Dendritic cell treated with granulocyte-macrophage colony-stimulating factor and Interleukin-4, amounts not matched to agents 40 ng/mL and 50 ng/mL, for 4 days (primary cell): ENCODE measurements at regions of chr1 and their contacts with region 1.

Region 1: GRCh38 chr1:205255941-205256780 is 28.4 kb downstream of the TMCC2 start:
- H3K4me3 Mint-ChIP-seq: no peak overlapping the region
- H3K27ac Mint-ChIP-seq: peak overlapping the region; percentile 65
- H3K4me1 Mint-ChIP-seq: peaks cover 95% of the 10 kb centered on the region
- H3K27me3 Mint-ChIP-seq: peaks cover 6% of the 10 kb centered on the region

Region 2: DNA sequence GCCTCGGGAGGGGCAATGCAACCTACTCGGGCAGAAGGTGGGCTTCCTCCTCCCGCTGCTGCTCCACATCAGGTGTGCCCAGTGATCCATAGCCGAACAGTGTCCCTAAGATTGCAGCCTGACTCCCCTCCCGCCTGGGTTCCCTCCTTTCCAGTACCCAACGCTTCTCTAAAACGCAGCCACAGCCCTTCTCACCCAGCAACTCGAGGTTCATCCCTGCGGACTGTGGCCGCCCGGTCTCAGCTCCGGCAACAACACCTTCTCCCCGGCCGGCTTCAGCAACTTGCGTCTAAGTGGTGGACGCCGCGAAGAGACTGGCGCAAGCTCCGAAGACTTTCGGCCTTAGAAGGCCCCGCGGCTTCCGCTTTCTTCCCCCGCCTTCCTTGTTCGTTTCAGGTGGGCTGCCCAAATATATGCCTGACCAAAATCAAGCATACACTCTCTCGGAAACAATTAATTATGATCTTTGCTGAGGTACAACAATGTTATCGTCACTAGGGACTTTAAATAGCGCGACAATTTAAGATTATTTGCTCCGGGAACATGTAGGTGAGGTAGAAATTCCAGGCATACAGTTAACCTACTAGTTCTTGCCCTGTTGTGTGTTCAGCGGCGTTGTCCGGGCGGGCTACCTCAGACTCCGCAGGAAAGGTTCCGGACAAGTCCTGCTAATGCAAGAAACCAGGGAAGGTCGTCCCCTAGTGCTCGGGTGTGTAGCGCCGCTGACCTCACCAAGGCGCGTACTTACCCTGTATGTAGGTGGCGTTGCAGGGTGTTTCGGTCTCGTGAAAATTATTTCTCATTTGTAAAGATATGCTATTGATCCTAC is 134.3 kb before region 1 on chr1 and contains the start of gene RBBP5:
- intact Hi-C with region 1: loop called (anchors 5 kb)
- H3K4me3 Mint-ChIP-seq: peak within 1 kb of the TSS; percentile 99
- H3K27ac Mint-ChIP-seq: peak within 1 kb of the TSS; percentile 92
- H3K4me1 Mint-ChIP-seq: peaks cover 37% of the 10 kb centered on the region
- H3K27me3 Mint-ChIP-seq: no peaks in the 10 kb centered on the region

Region 3: DNA sequence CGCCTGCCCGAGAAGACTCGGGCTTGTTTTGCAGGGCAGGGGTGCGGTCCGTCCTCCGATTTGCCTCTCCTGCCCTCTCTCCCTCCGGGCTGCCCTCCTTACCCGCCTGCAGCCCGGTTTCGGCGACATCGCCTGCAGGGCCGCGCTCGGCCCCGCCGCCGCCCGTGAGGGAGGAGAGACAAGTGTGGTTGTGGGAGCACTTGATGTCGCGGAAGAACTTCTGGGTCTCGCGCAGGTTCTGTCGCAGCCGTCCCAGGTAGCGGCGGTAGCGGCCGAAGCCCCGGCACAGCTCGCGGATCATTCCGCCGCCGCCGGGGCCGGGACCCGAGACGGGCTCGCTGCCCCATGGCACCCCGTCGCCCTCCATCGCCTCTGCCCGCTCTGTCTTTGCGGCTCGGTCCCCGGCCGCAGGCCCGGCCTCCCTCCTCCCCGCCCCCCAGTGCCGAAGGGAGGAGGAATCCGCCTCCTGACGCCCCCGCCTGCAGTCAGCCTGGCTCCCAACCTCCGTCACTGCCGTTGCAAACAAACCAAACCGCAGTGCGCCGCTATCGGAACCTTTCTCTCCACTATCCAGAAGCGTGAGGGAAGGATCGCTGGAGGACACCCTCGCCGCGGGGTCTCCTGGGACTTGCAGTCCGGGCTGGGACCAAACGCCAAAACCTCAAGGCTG is 44.9 kb before region 1 on chr1 and contains the start of gene DSTYK:
- intact Hi-C with region 1: loop called (anchors 5 kb)
- H3K4me3 Mint-ChIP-seq: peak within 1 kb of the TSS; percentile 91
- H3K27ac Mint-ChIP-seq: peak within 1 kb of the TSS; percentile 96
- H3K4me1 Mint-ChIP-seq: peaks cover 51% of the 10 kb centered on the region
- H3K27me3 Mint-ChIP-seq: no peaks in the 10 kb centered on the region

Region 4: GRCh38 chr1:205229399-205229871 is 26.7 kb before region 1 on chr1:
- intact Hi-C with region 1: loop called (anchors 1 kb)
- H3K4me3 Mint-ChIP-seq: peak overlapping the region; percentile 91
- H3K27ac Mint-ChIP-seq: peak overlapping the region; percentile 88
- H3K4me1 Mint-ChIP-seq: peaks cover 71% of the 10 kb centered on the region
- H3K27me3 Mint-ChIP-seq: peaks cover 41% of the 10 kb centered on the region

Region 5: DNA sequence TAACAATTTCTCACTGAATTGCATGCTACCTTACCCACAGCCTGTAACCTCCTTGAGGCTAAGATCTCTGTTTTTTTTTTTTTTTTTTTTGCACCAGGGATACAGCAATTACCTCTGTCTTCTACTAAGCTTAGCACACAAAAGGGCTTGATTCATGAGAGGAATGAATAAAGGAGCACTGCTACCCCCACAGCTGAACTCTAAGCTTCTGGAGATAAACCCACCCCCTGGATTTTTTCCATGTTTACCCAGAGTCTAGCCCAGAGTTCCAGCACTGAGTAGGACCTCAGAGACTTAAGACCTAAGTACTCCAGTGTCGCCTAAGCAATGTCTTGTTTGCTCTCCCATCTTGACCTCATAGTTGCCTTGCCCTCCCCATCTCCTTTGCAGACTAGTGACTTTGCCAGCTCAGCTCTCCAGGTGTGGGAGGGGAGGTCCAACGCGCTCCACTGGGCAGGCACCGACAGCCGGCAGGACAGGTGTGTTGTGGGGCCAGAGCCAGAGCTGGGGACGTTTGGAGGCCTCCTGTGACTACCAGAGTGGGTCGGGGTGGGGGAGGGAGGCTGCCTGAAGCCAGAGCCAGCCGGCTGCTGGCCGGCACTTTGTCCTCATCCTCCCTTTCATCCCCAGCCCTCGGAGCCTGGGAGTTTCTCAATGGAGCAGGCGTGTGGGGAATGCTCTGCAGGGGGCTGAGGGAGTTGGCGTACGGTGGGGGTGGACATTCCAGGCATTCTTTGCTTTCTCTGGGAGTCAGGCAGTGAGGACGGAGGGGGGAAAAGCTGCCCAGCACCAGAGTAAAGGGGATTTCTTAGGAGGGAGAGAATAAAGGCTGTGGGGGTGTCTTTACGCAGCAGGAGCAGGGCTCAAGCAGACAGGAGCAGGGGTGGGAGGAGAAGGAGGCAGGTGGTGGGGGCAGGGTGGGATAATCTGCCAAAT is 45.0 kb after region 1 on chr1:
- intact Hi-C with region 1: no loop called
- H3K4me3 Mint-ChIP-seq: no peak overlapping the region
- H3K27ac Mint-ChIP-seq: no peak overlapping the region
- H3K4me1 Mint-ChIP-seq: peaks cover 24% of the 10 kb centered on the region
- H3K27me3 Mint-ChIP-seq: peaks cover 4% of the 10 kb centered on the region

Region 6: GRCh38 chr1:205313563-205314308 is 57.6 kb after region 1 on chr1:
- intact Hi-C with region 1: no loop called
- H3K4me3 Mint-ChIP-seq: peak overlapping the region; percentile 56
- H3K27ac Mint-ChIP-seq: peak overlapping the region; percentile 93
- H3K4me1 Mint-ChIP-seq: peaks cover 77% of the 10 kb centered on the region
- H3K27me3 Mint-ChIP-seq: no peaks in the 10 kb centered on the region

Region 7: GRCh38 chr1:205879975-205880374 is 623.8 kb after region 1 on chr1:
- intact Hi-C with region 1: no loop called
- H3K4me3 Mint-ChIP-seq: no peak overlapping the region
- H3K27ac Mint-ChIP-seq: no peak overlapping the region
- H3K4me1 Mint-ChIP-seq: no peaks in the 10 kb centered on the region
- H3K27me3 Mint-ChIP-seq: peaks cover 49% of the 10 kb centered on the region